Panc1 (cell line): ENCODE measurements at regions of chr11 and their contacts with region 1.

Region 1: DNA sequence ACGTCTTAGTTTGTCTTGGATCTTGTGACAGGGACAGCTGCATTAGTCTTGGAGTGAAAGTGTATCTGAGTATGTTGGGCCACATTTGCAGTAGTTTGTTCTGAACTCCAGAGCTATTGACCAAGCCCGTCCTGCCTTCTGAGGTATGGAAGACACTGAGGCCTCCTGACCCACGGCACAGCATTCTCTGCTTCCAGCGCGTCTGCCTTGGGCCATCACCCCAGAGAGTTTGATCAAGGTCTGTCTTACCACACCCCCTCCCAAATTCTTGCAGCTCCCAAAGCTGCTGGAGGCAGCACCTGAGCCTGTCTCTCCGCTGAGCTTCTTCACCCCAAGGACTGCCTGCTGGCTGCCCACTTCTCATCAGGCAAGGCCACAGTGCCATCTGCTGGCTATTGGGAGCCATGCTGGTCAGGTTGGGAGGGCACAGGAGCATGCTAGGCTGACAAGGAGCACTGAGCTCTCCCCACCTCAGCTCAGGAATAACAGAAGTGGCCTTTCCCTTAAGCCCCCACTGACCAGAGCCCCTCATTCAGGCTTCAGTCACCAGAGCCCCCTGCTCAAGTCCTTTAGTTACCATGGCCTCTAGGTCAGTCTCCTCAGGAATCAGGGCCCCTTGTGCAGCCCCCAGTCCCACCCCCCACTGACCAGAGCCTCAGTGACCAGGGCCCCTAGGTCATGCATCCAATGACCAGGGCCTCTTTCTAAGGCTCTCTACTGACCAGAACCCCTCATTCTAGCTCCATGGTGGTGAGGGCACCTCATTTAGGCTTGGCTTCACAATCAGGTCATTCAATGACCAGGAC is 27.2 kb upstream of the SMPD1 start:
- DNase-seq: peak; percentile 66
- ATAC-seq: peak; percentile 98
- H3K4me3 ChIP-seq: no peak overlapping the region
- H3K27ac ChIP-seq: no peak overlapping the region
- H3K4me1 ChIP-seq: no peaks in the 10 kb centered on the region
- H3K27me3 ChIP-seq: peaks cover 2% of the 10 kb centered on the region
- CTCF ChIP-seq: peak; percentile 99

Region 2: GRCh38 chr11:5891216-5891800 is 471.8 kb before region 1 on chr11:
- CTCF ChIA-PET with region 1: interaction called, 10 read pairs
- POLR2A ChIA-PET with region 1: no interaction called
- in situ Hi-C with region 1: no loop called
- intact Hi-C with region 1: no loop called
- DNase-seq: peak; percentile 13
- ATAC-seq: no peak
- H3K4me3 ChIP-seq: no peak overlapping the region
- H3K27ac ChIP-seq: no peak overlapping the region
- H3K4me1 ChIP-seq: no peaks in the 10 kb centered on the region
- H3K27me3 ChIP-seq: peaks cover 6% of the 10 kb centered on the region
- CTCF ChIP-seq: peak; percentile 79

Region 3: DNA sequence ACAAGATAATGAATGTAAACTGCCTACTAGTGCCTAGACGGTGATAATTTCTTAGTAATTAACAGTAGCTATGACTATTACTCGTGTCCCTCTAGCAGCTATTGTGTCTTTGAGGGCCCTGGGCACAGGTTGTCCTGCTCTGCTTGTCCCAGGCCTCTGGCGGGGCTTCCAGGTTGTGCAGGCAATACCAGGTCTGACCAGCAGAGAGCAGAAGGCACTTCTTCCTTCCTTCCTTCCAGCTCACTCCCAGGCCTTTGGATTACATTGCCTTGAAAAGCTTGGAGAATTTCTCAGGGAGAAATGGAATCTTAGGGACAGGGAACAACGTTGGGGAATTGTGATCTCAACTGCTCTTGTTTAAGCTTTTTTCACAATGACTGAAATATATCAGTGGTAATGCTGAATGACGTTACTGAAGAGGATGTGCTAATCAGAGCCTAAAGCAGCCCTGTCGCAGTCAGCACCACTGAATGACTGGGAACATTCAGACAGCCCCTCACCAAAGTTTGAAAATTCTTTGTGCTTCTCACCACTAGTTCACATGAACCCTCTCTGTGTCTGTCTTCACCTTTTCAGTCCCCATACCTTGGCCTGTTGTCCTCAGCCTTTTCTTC is 111.8 kb before region 1 on chr11:
- CTCF ChIA-PET with region 1: interaction called, 56 read pairs
- POLR2A ChIA-PET with region 1: interaction called, 3 read pairs
- in situ Hi-C with region 1: no loop called
- intact Hi-C with region 1: no loop called
- DNase-seq: peak; percentile 69
- ATAC-seq: peak; percentile 98
- H3K4me3 ChIP-seq: no peak overlapping the region
- H3K27ac ChIP-seq: no peak overlapping the region
- H3K4me1 ChIP-seq: no peaks in the 10 kb centered on the region
- H3K27me3 ChIP-seq: peaks cover 10% of the 10 kb centered on the region
- CTCF ChIP-seq: peak; percentile 96

Region 4: DNA sequence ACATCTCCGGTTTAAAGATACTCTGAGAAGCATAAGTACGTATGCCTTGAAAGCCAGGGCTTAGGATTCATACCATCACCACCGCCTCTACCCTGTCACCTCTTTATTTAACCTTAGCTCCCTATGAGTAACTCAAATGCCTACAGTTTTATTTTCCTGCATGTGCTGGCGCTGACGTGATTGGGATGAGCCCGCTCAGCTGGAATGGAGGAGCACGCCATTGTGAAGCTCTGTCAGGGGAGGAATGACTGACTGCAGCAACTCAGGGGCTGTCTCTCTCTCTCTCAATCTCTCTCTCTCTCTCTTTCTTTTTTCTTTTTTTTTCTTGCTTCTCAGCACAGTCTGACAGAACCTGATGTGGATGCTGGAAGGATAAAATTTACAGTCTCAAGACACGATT is 55.2 kb before region 1 on chr11:
- CTCF ChIA-PET with region 1: no interaction called
- POLR2A ChIA-PET with region 1: interaction called, 11 read pairs
- in situ Hi-C with region 1: no loop called
- intact Hi-C with region 1: no loop called
- DNase-seq: no peak
- ATAC-seq: peak; percentile 48; the same call in 1 of the 2 replicates
- H3K4me3 ChIP-seq: no peak overlapping the region
- H3K27ac ChIP-seq: no peak overlapping the region
- H3K4me1 ChIP-seq: no peaks in the 10 kb centered on the region
- H3K27me3 ChIP-seq: peaks cover 38% of the 10 kb centered on the region
- CTCF ChIP-seq: no peak

Region 5: DNA sequence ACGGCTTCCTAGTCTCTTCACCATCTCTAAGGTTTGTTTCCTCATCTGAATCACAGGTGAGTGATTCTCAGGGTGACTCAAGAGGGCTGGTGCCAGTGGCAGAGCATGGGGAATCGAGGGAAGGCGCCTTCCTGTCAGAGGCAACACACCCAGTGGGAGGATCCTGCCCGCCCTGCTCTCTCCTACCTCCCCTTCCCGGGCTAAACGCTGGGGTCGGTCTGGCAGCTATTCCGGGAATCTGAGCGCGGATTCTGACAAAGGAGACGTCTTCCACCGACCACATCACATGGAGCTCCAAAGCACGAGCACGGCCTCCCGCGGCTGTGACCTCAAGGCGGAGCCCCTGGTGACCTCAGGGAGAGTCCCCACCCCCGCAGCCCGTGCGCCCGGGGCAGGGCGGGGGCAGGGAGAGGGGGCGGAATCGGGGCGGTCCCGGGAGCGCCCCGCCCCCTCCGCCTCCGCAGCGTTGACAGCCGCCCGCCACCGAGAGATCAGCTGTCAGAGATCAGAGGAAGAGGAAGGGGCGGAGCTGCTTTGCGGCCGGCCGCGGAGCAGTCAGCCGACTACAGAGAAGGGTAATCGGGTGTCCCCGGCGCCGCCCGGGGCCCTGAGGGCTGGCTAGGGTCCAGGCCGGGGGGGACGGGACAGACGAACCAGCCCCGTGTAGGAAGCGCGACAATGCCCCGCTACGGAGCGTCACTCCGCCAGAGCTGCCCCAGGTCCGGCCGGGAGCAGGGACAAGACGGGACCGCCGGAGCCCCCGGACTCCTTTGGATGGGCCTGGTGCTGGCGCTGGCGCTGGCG is 27.0 kb after region 1 on chr11 and contains the start of gene SMPD1:
- CTCF ChIA-PET with region 1: interaction called, 10 read pairs
- POLR2A ChIA-PET with region 1: no interaction called
- in situ Hi-C with region 1: no loop called
- intact Hi-C with region 1: no loop called
- DNase-seq: peak; percentile 86
- ATAC-seq: peak; percentile 97
- H3K4me3 ChIP-seq: peak within 1 kb of the TSS; percentile 58 to 66
- H3K27ac ChIP-seq: peak within 1 kb of the TSS; percentile 44
- H3K4me1 ChIP-seq: peaks cover 8% of the 10 kb centered on the region
- H3K27me3 ChIP-seq: no peaks in the 10 kb centered on the region
- CTCF ChIP-seq: no peak
- total RNA-seq, gene SMPD1: 20.0 TPM

Region 6: DNA sequence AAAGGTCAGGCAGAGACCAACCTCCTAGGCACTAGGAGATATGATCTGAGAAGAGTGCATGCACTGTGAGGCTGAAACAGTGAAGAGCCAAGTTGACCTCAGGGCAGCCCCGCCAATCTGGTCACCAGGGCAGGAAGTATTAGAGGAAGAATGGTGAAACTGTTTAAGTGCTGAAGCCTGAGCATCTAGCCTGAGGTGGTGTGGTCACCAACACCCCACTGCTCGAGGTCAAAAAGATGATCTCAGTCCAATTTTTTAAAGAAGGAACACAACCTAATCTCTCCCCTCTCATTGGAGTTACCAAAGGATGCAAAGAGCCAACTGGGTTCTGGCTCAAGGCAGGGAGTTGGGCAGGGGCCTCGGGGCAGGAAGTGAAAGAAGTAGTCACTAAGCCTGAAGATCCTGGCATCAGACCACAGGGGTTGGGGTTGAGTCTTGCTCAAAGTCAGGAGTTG is 51.8 kb after region 1 on chr11:
- CTCF ChIA-PET with region 1: no interaction called
- POLR2A ChIA-PET with region 1: no interaction called
- in situ Hi-C with region 1: no loop called
- intact Hi-C with region 1: no loop called
- DNase-seq: no peak
- ATAC-seq: no peak
- H3K4me3 ChIP-seq: no peak overlapping the region
- H3K27ac ChIP-seq: no peak overlapping the region
- H3K4me1 ChIP-seq: peaks cover 4% of the 10 kb centered on the region
- H3K27me3 ChIP-seq: peaks cover 16% of the 10 kb centered on the region
- CTCF ChIP-seq: no peak